Cardiac septum (tissue), 1 donor: ENCODE measurements at regions of chr7 and their contacts with region 1.

Region 1: DNA sequence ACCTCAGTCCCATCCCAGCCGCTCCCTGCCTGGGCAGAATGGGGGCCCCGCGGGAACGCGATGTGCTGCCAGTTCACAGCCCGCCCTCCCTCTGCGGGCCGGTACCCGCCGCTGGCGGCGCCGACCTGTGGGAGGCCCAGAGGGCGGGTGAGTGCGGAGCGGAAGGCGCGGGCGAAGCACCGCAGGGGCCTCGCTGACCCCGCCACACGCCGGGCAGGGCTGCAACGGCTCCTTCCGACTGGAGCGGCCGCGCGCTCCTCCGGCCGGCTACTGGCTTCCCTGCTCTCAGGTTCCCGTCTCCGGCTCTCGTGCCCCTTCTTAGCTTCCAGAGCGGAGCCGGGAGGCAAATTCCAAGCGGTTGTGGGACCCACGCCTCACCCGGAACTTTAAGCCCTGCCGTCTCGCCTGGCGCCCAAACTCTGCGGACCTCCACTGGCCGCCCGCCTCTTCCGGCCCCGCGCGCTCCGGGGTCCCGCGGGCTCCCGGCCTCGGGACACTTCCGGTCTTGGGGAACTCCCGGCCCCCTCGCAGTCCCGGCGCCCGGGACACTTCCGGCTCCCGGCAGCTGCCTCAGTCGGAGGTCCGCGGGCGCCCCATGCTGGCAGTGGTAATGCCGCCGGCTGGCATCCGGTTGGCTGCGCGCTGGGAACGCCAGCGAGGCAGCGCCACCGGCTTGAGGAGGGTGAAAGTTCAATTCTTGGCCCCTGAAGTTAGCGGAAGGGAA is at the start of gene CYREN:
- DNase-seq: peak; percentile 97
- total RNA-seq, gene CYREN: 24.0 TPM

Region 2: DNA sequence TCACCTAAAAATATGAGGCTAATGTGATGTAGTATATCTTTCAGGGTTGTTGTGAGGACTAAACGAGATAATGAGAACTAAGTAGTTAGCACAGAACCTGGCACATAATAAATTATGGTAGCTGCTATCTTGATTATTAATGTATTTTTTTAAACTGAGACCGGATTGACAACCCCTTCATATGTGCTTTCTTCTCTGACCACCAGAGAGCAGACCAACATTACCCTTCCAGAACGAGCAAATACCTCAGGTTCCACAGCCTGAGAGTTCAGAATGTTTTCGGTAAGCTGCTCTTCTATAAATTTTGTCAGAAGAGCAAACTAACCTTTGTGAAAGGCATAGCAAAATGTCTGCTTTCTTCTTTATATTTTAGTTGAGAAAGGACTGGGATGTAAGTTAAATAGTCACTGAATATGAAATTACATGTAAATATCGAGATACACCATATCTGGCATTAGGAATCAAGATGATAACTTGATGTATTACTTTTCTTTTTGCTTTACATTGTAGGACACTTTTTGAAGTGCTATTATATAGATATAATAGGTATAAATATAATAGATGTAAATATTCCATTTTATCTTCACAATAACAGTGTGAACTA is 537.4 kb before region 1 on chr7:
- intact Hi-C with region 1: loop called (anchors 5 kb)
- DNase-seq: no peak

Region 3: GRCh38 chr7:134986363-134987251 is 183.8 kb before region 1 on chr7 and contains the start of gene AGBL3:
- intact Hi-C with region 1: loop called (anchors 1 kb)
- DNase-seq: peak; percentile 96
- total RNA-seq, gene AGBL3: 1.4 TPM

Region 4: GRCh38 chr7:135102372-135102771 is 68.1 kb before region 1 on chr7:
- intact Hi-C with region 1: no loop called
- DNase-seq: no peak